ENCODE measurements at regions of chr11 and their contacts with region 1.

Region 1: GRCh38 chr11:6315811-6316425 is 4.4 kb downstream of the CAVIN3 start:
- H3K4me3 ChIP-seq: no peak overlapping the region
- H3K27ac ChIP-seq: no peak overlapping the region
- H3K4me1 ChIP-seq: no peaks in the 10 kb centered on the region
- CTCF ChIP-seq: peak; percentile 39; the same call in 1 of the 2 replicates

Region 2: DNA sequence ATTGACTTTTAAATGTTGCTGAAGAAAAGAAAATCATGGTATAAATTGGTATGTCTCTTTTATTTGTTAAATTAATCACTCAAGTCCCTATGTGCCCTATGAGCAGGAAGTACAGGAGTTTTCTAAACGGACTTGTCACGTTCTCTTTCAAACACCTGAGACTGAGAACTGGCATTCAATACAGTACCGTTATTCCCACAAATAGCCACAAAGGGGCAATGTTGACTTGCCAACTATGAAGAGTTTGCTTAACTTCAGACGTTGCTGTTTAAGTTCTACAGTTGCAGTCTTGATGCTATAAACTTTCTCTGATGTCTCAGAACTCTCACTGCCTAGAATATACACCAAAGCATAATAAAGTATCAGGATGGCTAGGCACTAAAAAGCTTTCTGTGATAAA is 293.0 kb before region 1 on chr11:
- CTCF ChIA-PET with region 1: interaction called, 18 read pairs
- POLR2A ChIA-PET with region 1: no interaction called
- H3K4me3 ChIP-seq: no peak overlapping the region
- H3K27ac ChIP-seq: no peak overlapping the region
- H3K4me1 ChIP-seq: no peaks in the 10 kb centered on the region
- CTCF ChIP-seq: no peak

Region 3: DNA sequence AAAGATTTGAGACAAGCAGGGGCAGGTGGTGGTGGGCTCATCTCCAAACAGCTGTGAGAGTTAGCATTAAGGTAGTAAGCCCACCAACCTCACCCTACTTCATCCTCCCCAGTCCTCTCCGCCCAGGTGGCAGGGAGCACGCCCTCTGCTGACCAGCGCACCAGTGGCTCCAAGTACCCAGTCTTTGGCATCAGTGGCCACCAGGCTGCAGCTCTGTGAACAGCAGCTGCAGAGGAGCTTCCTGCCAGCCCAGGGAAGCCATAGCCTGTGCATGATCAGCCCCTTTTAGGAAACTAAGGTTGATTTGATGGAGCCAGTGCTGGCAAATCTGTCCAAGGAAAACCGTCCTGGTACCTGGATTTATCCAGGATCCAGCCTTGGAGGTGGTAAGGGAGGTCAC is 17.3 kb before region 1 on chr11:
- CTCF ChIA-PET with region 1: interaction called, 13 read pairs
- POLR2A ChIA-PET with region 1: no interaction called
- H3K4me3 ChIP-seq: no peak overlapping the region
- H3K27ac ChIP-seq: no peak overlapping the region
- H3K4me1 ChIP-seq: no peaks in the 10 kb centered on the region
- CTCF ChIP-seq: peak; percentile 48

Region 4: GRCh38 chr11:6333112-6333511 is 17.2 kb after region 1 on chr11:
- CTCF ChIA-PET with region 1: interaction called, 11 read pairs
- POLR2A ChIA-PET with region 1: no interaction called
- H3K4me3 ChIP-seq: no peak overlapping the region
- H3K27ac ChIP-seq: no peak overlapping the region
- H3K4me1 ChIP-seq: no peaks in the 10 kb centered on the region
- CTCF ChIP-seq: no peak

Measured in HEK293 (cell line).